GM10248 (cell line): ENCODE measurements at regions of chr1 and their contacts with region 1.

Region 1: GRCh38 chr1:110196917-110197765 is 13.0 kb upstream of the KCNC4 start:
- DNase-seq: peak; percentile 88
- CTCF ChIP-seq: peak; percentile 95

Region 2: GRCh38 chr1:110165761-110166317 is 31.3 kb before region 1 on chr1:
- CTCF ChIA-PET with region 1: interaction called, 15 read pairs
- POLR2A ChIA-PET with region 1: no interaction called
- DNase-seq: no peak
- CTCF ChIP-seq: no peak

Region 3: GRCh38 chr1:110455151-110455550 is 258.0 kb after region 1 on chr1:
- CTCF ChIA-PET with region 1: interaction called, 295 read pairs
- POLR2A ChIA-PET with region 1: no interaction called
- DNase-seq: no peak
- CTCF ChIP-seq: no peak